Sigmoid colon (tissue), 7 donors: ENCODE measurements at regions of chr6 and their contacts with region 1.

Region 1: GRCh38 chr6:42726485-42727086 is 4.2 kb upstream of the PRPH2 start:
- DNase-seq: peak; percentile 93
- H3K4me3 ChIP-seq: peak overlapping the region; percentile 31 to 60 (median 52)
- H3K27ac ChIP-seq: peak overlapping the region; percentile 76 to 90 (median 87)
- H3K4me1 ChIP-seq: peaks cover 0 to 31% (median 13%) of the 10 kb centered on the region in 4 donors
- H3K27me3 ChIP-seq: no peaks in the 10 kb centered on the region
- CTCF ChIP-seq: peak; percentile 86 to 94 (median 92)
- EP300 ChIP-seq: no peak
- POLR2A ChIP-seq: no peak

Region 2: GRCh38 chr6:42520786-42521607 is 205.6 kb before region 1 on chr6:
- intact Hi-C with region 1: no loop called
- DNase-seq: no peak
- H3K4me3 ChIP-seq: no peak overlapping the region
- H3K27ac ChIP-seq: no peak overlapping the region
- H3K4me1 ChIP-seq: no peaks in the 10 kb centered on the region
- H3K27me3 ChIP-seq: no peaks in the 10 kb centered on the region
- CTCF ChIP-seq: no peak
- EP300 ChIP-seq: no peak
- POLR2A ChIP-seq: no peak

Region 3: GRCh38 chr6:42661540-42662153 is 64.9 kb before region 1 on chr6:
- intact Hi-C with region 1: loop called (anchors 2 kb)
- DNase-seq: peak; percentile 90
- H3K4me3 ChIP-seq: no peak overlapping the region
- H3K27ac ChIP-seq: peak overlapping the region in 1 of 4 donors; percentile 3
- H3K4me1 ChIP-seq: peaks cover 0 to 7% (median 0%) of the 10 kb centered on the region in 4 donors
- H3K27me3 ChIP-seq: no peaks in the 10 kb centered on the region
- CTCF ChIP-seq: peak; percentile 67 to 88 (median 87)
- EP300 ChIP-seq: no peak
- POLR2A ChIP-seq: no peak

Region 4: DNA sequence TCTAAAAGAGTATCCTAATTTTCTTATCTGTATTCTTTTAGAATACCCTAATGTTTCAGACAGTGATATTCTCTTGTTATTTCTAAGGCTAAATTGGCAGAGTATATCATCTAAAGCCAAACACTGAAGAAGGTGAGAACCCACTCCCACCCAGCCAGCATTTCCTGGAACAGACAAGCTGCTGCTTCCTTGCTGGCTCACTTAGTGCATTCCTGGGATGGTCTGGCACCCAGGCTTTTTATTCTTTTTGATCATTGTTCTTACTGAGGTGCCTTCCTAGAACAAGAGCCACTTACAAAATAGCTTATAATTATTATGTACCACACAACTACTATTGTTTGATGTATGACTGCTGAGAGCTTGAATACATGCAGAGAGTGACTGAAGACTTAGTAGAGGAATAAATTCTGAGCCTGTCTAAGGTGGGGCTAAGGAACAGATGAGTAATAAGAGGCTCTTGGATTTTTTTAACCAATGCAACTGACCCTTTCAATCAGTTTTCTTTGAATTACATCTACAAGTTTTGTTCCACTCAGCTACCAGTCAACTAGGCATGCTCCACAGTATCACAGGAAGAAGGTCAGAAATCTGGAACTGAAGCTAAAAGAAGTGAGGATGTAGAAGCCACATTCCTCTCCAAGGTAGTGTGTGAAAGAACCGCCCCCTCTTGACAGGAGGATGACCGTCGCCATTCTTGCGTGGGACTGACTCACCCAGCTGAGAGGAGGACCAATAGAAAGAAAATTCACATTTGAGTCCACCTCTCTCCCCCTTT is 34.3 kb before region 1 on chr6:
- intact Hi-C with region 1: loop called (anchors 5 kb)
- DNase-seq: no peak
- H3K4me3 ChIP-seq: no peak overlapping the region
- H3K27ac ChIP-seq: peak overlapping the region; percentile 55 to 75 (median 69)
- H3K4me1 ChIP-seq: peaks cover 0 to 52% (median 29%) of the 10 kb centered on the region in 4 donors
- H3K27me3 ChIP-seq: no peaks in the 10 kb centered on the region
- CTCF ChIP-seq: no peak
- EP300 ChIP-seq: no peak
- POLR2A ChIP-seq: no peak

Region 5: DNA sequence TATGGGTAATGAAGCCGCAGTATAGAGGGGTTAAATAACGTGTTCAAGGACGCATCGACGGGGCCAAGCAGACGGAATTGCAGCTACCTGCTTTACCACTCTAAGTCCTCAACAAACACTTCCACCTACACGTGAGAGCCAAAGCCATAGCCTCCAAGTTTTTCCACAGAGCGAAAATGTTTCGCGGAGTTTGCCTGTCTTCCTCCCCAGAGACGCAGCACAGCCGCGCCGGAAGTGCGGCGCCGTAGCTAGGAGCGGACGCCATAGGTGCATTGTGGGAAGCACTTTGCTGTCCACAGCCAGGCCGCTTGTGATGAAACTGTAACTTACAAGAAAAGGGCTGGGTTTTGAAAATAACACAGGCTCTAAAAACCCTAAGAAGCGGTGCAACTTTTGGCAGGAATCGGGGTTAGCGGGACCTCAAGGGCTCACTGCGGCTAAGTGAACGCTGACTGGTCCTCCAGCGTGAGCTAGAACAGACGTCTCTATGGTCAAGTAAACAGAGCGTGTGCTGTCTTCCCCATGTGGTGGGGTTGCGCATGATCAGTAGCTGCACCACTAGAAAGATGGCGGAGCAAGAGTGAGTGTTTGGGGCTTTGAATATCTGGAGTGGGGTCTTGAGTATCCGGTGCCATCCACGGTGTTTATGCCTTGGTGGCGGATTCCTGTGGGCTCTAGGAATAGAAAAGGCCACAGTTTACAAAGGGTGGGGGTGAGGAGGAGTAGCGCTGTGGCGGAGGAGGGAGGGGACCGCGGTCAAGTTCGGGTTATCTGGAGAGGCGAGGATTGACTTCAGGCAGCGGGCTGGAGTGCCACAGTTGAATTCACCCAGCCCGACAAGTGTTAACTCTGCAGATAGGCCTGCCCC is 153.0 kb after region 1 on chr6 and contains the start of gene RPL7L1:
- intact Hi-C with region 1: loop called (anchors 2 kb)
- DNase-seq: peak; percentile 93
- H3K4me3 ChIP-seq: peak within 1 kb of the TSS; percentile 54 to 71 (median 60)
- H3K27ac ChIP-seq: peak within 1 kb of the TSS; percentile 87 to 92 (median 92)
- H3K4me1 ChIP-seq: peaks cover 0 to 40% (median 22%) of the 10 kb centered on the region in 4 donors
- H3K27me3 ChIP-seq: no peaks in the 10 kb centered on the region
- CTCF ChIP-seq: peak in 1 of 4 experiments; percentile 29
- EP300 ChIP-seq: no peak
- POLR2A ChIP-seq: peak in 1 of 2 donors; percentile 54
- total RNA-seq, gene RPL7L1: 67.6 to 79.0 (median 75.7) TPM